Activated CD4-positive, alpha-beta T cell treated with anti-CD3 and anti-CD28 coated beads, Interleukin-2, amount 10 ng/mL, durations not matched to agents 7 days and 5 days (primary cell): ENCODE measurements at regions of chr2 and their contacts with region 1.

Region 1: DNA sequence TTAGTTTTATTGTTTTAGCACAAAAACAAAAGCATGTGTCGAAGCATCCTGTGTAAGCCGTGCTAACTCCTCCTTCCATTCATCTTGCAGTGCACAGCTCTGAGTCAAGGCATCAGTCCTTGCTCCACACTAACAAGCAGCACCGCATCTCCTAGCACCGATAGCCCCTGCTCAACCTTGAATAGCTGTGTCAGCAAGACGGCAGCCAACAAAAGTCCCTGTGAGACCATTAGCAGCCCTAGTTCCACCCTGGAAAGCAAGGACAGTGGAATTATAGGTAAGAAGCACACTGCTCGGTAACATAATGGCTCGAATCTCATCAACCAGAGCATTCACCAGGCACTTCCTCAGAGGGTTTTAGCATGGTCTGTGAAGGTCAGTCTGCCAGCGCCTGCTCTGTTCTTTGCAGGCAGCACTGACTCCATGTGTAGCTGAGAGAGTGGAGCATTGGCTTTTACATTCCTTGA is 136.2 kb downstream of the WDSUB1 start:
- DNase-seq: no peak
- H3K4me3 Mint-ChIP-seq: no peak overlapping the region
- H3K27ac Mint-ChIP-seq: no peak overlapping the region
- H3K4me1 Mint-ChIP-seq: peaks cover 34% of the 10 kb centered on the region
- H3K27me3 Mint-ChIP-seq: no peaks in the 10 kb centered on the region

Region 2: GRCh38 chr2:159140070-159140769 is 10.1 kb before region 1 on chr2:
- CTCF ChIA-PET with region 1: no interaction called
- POLR2A ChIA-PET with region 1: interaction called, 10 read pairs
- DNase-seq: no peak
- H3K4me3 Mint-ChIP-seq: no peak overlapping the region
- H3K27ac Mint-ChIP-seq: no peak overlapping the region
- H3K4me1 Mint-ChIP-seq: peaks cover 4% of the 10 kb centered on the region
- H3K27me3 Mint-ChIP-seq: no peaks in the 10 kb centered on the region

Region 3: GRCh38 chr2:159349674-159350299 is 199.5 kb after region 1 on chr2:
- CTCF ChIA-PET with region 1: no interaction called
- POLR2A ChIA-PET with region 1: no interaction called
- DNase-seq: no peak
- H3K4me3 Mint-ChIP-seq: no peak overlapping the region
- H3K27ac Mint-ChIP-seq: no peak overlapping the region
- H3K4me1 Mint-ChIP-seq: no peaks in the 10 kb centered on the region
- H3K27me3 Mint-ChIP-seq: no peaks in the 10 kb centered on the region